Motor neuron (in vitro differentiated cells): ENCODE measurements at regions of chr9 and their contacts with region 1.

Region 1: DNA sequence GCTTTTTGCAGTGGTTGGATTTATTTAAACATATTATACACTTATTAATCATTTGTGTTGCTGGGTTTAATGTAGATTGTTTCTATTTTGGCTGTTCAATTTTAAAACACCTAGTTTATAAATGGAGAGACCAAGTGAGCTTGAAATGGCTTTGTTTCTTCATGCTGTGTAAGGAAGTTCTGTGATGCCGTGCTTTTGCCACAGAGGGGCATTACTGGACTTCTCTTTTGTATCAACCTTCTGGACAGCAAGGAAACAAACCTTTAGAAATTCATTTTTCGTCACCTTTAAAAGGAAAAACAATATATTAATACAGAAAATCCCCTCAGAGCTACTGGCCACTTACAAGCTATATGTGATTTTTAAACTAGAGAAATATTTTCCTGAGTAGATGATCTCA is 81.9 kb downstream of the DMRTA1 start:
- ATAC-seq: peak in 7 of 8 experiments; percentile 44 to 74 (median 52)
- H3K4me3 ChIP-seq: no peak overlapping the region
- H3K27ac ChIP-seq: no peak overlapping the region
- H3K4me1 ChIP-seq: no peaks in the 10 kb centered on the region

Region 2: GRCh38 chr9:22813529-22813928 is 285.0 kb after region 1 on chr9:
- in situ Hi-C with region 1: loop called in 1 of 9 experiments (anchors 25 kb)
- ATAC-seq: peak; percentile 25 to 81 (median 68)
- H3K4me3 ChIP-seq: no peak overlapping the region
- H3K27ac ChIP-seq: no peak overlapping the region
- H3K4me1 ChIP-seq: peaks cover 0 to 2% of the 10 kb centered on the region in 2 donors